ENCODE measurements at regions of chr3 and their contacts with region 1.

Region 1: DNA sequence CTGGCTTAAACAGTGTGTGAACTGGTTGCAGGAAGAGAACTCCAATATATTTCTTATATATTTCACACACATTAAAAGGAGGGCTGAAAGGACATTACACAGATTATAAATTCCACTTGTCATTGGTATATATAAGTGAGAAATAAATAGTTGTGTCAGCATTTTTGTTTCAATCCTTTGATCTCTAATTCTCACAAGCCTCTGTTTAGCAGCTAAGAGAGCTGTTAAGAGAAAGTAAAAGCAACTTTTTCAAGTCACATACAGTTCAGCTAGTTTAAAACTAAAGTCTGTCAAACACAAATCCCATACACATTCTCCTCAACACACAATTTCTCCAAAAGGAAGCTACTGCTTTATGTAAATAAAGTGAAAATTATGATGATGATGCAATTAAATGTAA is 70.5 kb upstream of the CCDC39 start:
- DNase-seq: no peak
- ATAC-seq: no peak
- H3K4me3 ChIP-seq: no peak overlapping the region
- H3K27ac ChIP-seq: no peak overlapping the region
- H3K4me1 ChIP-seq: no peaks in the 10 kb centered on the region
- H3K27me3 ChIP-seq: no peaks in the 10 kb centered on the region
- CTCF ChIP-seq: no peak
- POLR2A ChIP-seq: no peak
- RAD21 ChIP-seq: no peak

Region 2: DNA sequence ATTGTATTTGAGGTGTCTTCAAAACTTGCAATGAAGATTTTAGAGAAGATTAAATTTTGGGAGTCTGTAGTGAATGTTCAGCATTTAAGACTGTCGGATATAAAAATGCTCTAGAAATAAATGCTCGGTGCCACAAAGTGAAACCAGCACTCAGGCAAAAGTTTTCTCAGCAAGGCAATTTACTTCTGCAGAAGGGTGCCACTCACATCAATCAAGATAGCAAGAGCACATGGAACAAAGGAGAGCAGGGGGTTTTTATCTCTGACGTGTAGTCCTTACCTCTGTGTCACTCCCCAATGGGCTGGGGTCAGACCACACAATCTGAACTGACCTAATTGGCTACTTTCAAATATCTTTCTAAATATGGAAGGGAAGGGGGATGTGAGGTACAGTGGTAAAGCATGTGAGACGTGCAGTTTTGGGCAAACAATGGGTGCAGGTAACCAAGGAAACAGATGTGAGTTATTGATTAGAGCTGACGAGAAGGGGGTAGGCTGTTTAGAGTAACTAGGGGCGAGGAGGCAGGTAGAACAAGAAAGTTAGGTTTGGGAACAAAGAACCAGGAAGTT is 139.3 kb after region 1 on chr3:
- CTCF ChIA-PET with region 1: no interaction called
- POLR2A ChIA-PET with region 1: no interaction called
- dilution Hi-C with region 1: no loop called
- in situ Hi-C with region 1: no loop called
- intact Hi-C with region 1: no loop called
- DNase-seq: no peak
- ATAC-seq: no peak
- H3K4me3 ChIP-seq: no peak overlapping the region
- H3K27ac ChIP-seq: no peak overlapping the region
- H3K4me1 ChIP-seq: no peaks in the 10 kb centered on the region
- H3K27me3 ChIP-seq: no peaks in the 10 kb centered on the region
- CTCF ChIP-seq: no peak
- POLR2A ChIP-seq: no peak
- RAD21 ChIP-seq: no peak

Region 3: GRCh38 chr3:181581656-181582055 is 831.9 kb after region 1 on chr3:
- CTCF ChIA-PET with region 1: no interaction called
- POLR2A ChIA-PET with region 1: no interaction called
- dilution Hi-C with region 1: no loop called
- in situ Hi-C with region 1: no loop called
- intact Hi-C with region 1: loop called (anchors 10 kb)
- DNase-seq: no peak
- ATAC-seq: no peak
- H3K4me3 ChIP-seq: no peak overlapping the region
- H3K27ac ChIP-seq: no peak overlapping the region
- H3K4me1 ChIP-seq: no peaks in the 10 kb centered on the region
- H3K27me3 ChIP-seq: no peaks in the 10 kb centered on the region
- CTCF ChIP-seq: no peak
- POLR2A ChIP-seq: no peak
- RAD21 ChIP-seq: no peak

Measured in IMR-90 (cell line).